ENCODE measurements at regions of chr2 and their contacts with region 1.

Region 1: GRCh38 chr2:178891265-178891958 is 84.2 kb upstream of the TTN start:
- DNase-seq: peak; percentile 45
- H3K4me3 Mint-ChIP-seq: no peak overlapping the region
- H3K27ac Mint-ChIP-seq: no peak overlapping the region
- H3K4me1 Mint-ChIP-seq: no peaks in the 10 kb centered on the region
- H3K27me3 Mint-ChIP-seq: peaks cover 2% of the 10 kb centered on the region

Region 2: GRCh38 chr2:178863856-178864620 is 27.4 kb before region 1 on chr2:
- intact Hi-C with region 1: no loop called
- DNase-seq: no peak
- H3K4me3 Mint-ChIP-seq: no peak overlapping the region
- H3K27ac Mint-ChIP-seq: no peak overlapping the region
- H3K4me1 Mint-ChIP-seq: no peaks in the 10 kb centered on the region
- H3K27me3 Mint-ChIP-seq: peaks cover 2% of the 10 kb centered on the region

Region 3: DNA sequence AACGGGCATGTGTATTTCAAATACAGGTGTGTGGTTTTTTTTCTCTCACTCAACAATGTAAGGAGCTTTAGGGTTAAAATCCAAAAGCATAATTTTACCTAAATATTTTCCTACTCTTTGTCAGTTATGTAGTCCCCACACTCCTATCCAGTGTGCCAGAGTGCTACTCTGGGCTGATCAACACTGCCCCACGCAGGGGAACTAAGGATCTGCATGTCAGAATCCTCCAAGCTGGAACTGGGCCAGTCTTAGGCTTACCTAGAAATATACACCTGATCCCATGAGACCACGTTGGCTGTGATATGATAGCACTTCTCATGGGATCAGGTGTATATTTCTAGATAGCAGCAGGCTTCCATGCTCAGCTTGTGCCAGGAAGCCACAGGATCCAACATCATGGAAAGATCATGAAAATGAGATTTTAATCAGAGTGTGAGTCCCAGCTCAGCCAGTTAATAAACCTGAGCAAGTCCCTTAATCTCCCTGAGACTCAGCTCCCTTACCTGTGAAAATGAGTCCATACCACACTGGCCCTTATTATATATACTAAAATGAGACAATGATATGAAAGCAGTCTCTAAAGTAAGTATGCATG is 128.8 kb after region 1 on chr2:
- intact Hi-C with region 1: loop called (anchors 1 kb)
- DNase-seq: peak; percentile 13
- H3K4me3 Mint-ChIP-seq: no peak overlapping the region
- H3K27ac Mint-ChIP-seq: no peak overlapping the region
- H3K4me1 Mint-ChIP-seq: peaks cover 22% of the 10 kb centered on the region
- H3K27me3 Mint-ChIP-seq: no peaks in the 10 kb centered on the region

Region 4: DNA sequence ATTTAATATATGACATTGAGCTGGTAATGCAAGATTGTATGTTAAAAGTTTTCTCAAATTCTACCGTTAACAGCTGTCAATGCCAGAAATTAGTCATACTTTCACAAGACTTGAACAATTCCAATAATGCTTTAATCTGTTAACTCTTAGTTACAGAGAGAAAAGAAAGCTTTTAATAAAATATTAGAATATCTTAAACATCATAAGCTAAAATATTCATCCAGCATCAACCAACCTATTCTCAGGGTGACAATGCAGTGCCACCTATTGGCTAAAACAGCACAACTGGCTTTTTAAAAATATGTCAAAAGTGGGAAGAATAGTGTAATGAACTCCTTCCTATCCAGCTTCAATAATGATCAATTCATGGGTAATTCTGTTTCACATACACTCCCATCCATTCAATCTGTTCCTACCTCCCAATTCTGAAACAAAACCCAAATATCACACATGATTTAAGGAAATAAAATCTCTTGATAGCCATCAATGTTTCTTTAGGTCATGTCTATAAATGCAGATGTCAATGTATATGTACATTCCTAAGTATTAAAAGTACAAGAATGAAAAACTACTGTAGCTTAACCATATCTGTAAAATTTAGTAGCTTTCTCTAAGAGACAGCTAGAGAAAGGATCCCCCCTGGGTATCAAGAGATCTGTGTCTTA is 238.3 kb after region 1 on chr2:
- intact Hi-C with region 1: loop called (anchors 1 kb)
- DNase-seq: no peak
- H3K4me3 Mint-ChIP-seq: no peak overlapping the region
- H3K27ac Mint-ChIP-seq: no peak overlapping the region
- H3K4me1 Mint-ChIP-seq: no peaks in the 10 kb centered on the region
- H3K27me3 Mint-ChIP-seq: no peaks in the 10 kb centered on the region